ENCODE measurements at regions of chr1 and their contacts with region 1.

Region 1: GRCh38 chr1:212782422-212783154 is 9.0 kb downstream of the NSL1 start:
- DNase-seq: peak in 2 of 9 experiments; percentile 28 to 55
- ATAC-seq: peak; percentile 69
- H3K4me3 ChIP-seq: no peak overlapping the region
- H3K4me3 Mint-ChIP-seq: no peak overlapping the region
- H3K27ac ChIP-seq: no peak overlapping the region
- H3K27ac Mint-ChIP-seq: no peak overlapping the region
- H3K4me1 ChIP-seq: no peaks in the 10 kb centered on the region
- H3K4me1 Mint-ChIP-seq: peaks cover 7% of the 10 kb centered on the region
- H3K27me3 ChIP-seq: no peaks in the 10 kb centered on the region
- H3K27me3 Mint-ChIP-seq: no peaks in the 10 kb centered on the region
- CTCF ChIP-seq: peak; percentile 77

Region 2: GRCh38 chr1:212062832-212063438 is 719.7 kb before region 1 on chr1:
- CTCF ChIA-PET with region 1: no interaction called
- POLR2A ChIA-PET with region 1: no interaction called
- intact Hi-C with region 1: loop called in 1 of 2 experiments (anchors 10 kb)
- DNase-seq: peak in 2 of 9 experiments; percentile 39 to 59
- ATAC-seq: peak; percentile 62
- H3K4me3 ChIP-seq: no peak overlapping the region
- H3K4me3 Mint-ChIP-seq: no peak overlapping the region
- H3K27ac ChIP-seq: no peak overlapping the region
- H3K27ac Mint-ChIP-seq: no peak overlapping the region
- H3K4me1 ChIP-seq: no peaks in the 10 kb centered on the region
- H3K4me1 Mint-ChIP-seq: no peaks in the 10 kb centered on the region
- H3K27me3 ChIP-seq: no peaks in the 10 kb centered on the region
- H3K27me3 Mint-ChIP-seq: no peaks in the 10 kb centered on the region
- CTCF ChIP-seq: peak; percentile 74

Region 3: DNA sequence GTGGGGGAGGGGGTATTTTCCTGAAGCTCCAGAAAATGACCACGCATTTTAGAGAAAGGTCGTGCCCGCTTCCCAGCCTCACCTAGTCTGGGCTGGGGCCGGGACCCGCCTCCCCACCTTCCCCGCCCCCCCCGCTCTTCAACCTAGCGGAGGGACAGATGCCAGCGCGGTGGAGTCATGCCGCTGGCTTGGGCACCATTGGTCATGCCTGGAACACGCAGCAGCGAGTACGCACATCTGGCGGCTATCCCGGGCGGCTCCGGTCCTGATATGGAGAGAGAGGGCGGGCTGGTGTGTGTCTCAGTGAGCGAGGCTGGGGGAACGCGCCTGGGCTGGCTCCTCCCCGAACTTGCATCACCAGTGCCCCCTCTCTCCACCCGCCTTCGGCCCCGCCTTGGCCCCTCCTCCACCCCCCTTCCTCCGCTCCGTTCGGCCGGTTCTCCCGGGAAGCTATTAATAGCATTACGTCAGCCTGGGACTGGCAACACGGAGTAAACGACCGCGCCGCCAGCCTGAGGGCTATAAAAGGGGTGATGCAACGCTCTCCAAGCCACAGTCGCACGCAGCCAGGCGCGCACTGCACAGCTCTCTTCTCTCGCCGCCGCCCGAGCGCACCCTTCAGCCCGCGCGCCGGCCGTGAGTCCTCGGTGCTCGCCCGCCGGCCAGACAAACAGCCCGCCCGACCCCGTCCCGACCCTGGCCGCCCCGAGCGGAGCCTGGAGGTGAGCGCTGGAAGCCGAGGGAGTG is 174.2 kb before region 1 on chr1 and contains the start of gene ATF3:
- CTCF ChIA-PET with region 1: no interaction called
- POLR2A ChIA-PET with region 1: no interaction called
- intact Hi-C with region 1: loop called in 1 of 2 experiments (anchors 5 kb)
- DNase-seq: peak; percentile 62 to 91 (median 78)
- ATAC-seq: peak; percentile 73
- H3K4me3 ChIP-seq: peak within 1 kb of the TSS; percentile 75 to 86
- H3K4me3 Mint-ChIP-seq: peak within 1 kb of the TSS; percentile 94
- H3K27ac ChIP-seq: peak within 1 kb of the TSS in 1 of 2 experiments; percentile 31
- H3K27ac Mint-ChIP-seq: peak within 1 kb of the TSS; percentile 83
- H3K4me1 ChIP-seq: peaks cover 25% of the 10 kb centered on the region
- H3K4me1 Mint-ChIP-seq: peaks cover 22% of the 10 kb centered on the region
- H3K27me3 ChIP-seq: peaks cover 39 to 56% of the 10 kb centered on the region in 2 experiments
- H3K27me3 Mint-ChIP-seq: peaks cover 54% of the 10 kb centered on the region
- CTCF ChIP-seq: no peak
- total RNA-seq, gene ATF3: 8.9 to 10.4 TPM

Region 4: GRCh38 chr1:212743901-212744475 is 38.6 kb before region 1 on chr1:
- CTCF ChIA-PET with region 1: interaction called, 5 read pairs
- POLR2A ChIA-PET with region 1: no interaction called
- intact Hi-C with region 1: loop called in 1 of 2 experiments (anchors 5 kb)
- DNase-seq: peak in 3 of 9 experiments; percentile 10 to 34 (median 22)
- ATAC-seq: no peak
- H3K4me3 ChIP-seq: no peak overlapping the region
- H3K4me3 Mint-ChIP-seq: no peak overlapping the region
- H3K27ac ChIP-seq: no peak overlapping the region
- H3K27ac Mint-ChIP-seq: peak overlapping the region; percentile 46
- H3K4me1 ChIP-seq: peaks cover 9% of the 10 kb centered on the region
- H3K4me1 Mint-ChIP-seq: peaks cover 17% of the 10 kb centered on the region
- H3K27me3 ChIP-seq: no peaks in the 10 kb centered on the region
- H3K27me3 Mint-ChIP-seq: no peaks in the 10 kb centered on the region
- CTCF ChIP-seq: no peak

Region 5: DNA sequence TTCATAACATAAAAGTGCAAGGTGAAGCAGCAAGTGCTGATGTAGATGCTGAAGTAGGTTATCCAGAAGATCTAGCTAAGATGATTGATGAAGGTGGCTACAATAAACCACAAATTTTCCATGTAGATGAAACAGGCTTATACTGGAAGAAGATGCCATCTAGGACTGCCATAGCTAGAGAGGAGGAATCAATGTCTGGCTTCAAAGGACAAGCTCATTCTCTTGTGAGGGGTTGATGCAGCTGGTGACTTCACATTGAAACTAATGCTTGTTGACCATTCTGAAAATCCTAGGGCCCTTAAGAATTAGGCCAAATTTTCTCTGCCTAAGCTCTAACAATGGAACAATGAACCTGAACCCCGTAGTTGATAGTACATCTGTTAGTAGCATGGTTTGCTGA is 109.5 kb after region 1 on chr1:
- CTCF ChIA-PET with region 1: no interaction called
- POLR2A ChIA-PET with region 1: no interaction called
- intact Hi-C with region 1: no loop called
- DNase-seq: no peak
- ATAC-seq: no peak
- H3K4me3 ChIP-seq: no peak overlapping the region
- H3K4me3 Mint-ChIP-seq: no peak overlapping the region
- H3K27ac ChIP-seq: no peak overlapping the region
- H3K27ac Mint-ChIP-seq: no peak overlapping the region
- H3K4me1 ChIP-seq: no peaks in the 10 kb centered on the region
- H3K4me1 Mint-ChIP-seq: no peaks in the 10 kb centered on the region
- H3K27me3 ChIP-seq: no peaks in the 10 kb centered on the region
- H3K27me3 Mint-ChIP-seq: no peaks in the 10 kb centered on the region
- CTCF ChIP-seq: no peak

Measured in CD8-positive, alpha-beta T cell (primary cell).